SK-MEL-5 (cell line): ENCODE measurements at regions of chr10 and their contacts with region 1.

Region 1: DNA sequence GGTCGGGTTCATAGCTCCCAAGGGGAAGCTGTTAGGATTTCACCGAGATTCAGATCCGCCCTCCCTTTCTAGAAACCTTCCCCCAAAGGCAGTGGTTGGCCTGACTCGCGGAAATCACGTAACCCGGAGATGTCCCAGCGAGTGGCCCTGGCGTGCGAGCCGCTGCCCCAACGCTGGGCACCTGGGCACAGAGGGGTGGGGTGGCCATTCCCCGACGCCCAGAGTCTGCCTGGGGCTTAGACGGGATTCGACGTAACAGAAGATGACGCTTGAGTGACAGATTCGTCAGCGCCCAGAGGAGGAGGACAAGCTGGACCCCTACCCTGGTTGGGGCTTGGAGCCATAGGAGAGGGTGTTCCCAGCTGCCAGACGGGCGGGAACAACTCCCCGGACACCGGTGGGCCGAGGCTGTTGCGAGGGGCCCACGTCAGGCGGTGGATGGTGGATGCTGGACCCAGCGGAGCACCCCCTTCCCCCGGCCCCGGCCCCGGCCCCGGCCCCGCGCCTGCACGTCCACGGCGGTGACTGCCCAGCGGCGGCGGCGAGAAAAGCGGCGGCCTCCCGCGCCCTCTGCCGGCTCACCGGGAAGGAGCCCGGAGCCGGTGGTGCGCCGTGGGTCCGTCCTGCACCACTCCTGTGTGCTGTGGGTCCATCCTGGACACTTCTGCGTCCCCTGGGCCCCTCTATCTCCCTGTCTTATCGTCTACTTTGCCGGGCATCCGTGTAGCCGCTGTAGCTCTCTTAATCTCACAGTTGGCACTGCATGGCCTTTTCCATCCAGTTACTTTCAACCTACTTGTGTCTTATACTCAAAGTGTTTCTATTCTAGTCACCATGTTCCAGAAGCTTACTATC is 35.4 kb upstream of the KNDC1 start:
- DNase-seq: peak; percentile 29

Region 2: GRCh38 chr10:132939957-132940790 is 184.4 kb before region 1 on chr10:
- in situ Hi-C with region 1: loop called (anchors 25 kb)
- DNase-seq: peak; percentile 53

Region 3: GRCh38 chr10:133400624-133401424 is 276.2 kb after region 1 on chr10:
- in situ Hi-C with region 1: no loop called
- DNase-seq: no peak